Activated T-helper 1 cell treated with anti-CD3 and anti-CD28 coated beads, Interleukin-12 subunit alpha, Interleukin-12 subunit beta, Interleukin-2, Interleukin-4 antibody, amounts not matched to agents 30 ng/mL and 10 ng/mL and 1 ng/mL, durations not matched to agents 14 hours and 24 hours and 36 hours (primary cell): ENCODE measurements at regions of chr14 and their contacts with region 1.

Region 1: DNA sequence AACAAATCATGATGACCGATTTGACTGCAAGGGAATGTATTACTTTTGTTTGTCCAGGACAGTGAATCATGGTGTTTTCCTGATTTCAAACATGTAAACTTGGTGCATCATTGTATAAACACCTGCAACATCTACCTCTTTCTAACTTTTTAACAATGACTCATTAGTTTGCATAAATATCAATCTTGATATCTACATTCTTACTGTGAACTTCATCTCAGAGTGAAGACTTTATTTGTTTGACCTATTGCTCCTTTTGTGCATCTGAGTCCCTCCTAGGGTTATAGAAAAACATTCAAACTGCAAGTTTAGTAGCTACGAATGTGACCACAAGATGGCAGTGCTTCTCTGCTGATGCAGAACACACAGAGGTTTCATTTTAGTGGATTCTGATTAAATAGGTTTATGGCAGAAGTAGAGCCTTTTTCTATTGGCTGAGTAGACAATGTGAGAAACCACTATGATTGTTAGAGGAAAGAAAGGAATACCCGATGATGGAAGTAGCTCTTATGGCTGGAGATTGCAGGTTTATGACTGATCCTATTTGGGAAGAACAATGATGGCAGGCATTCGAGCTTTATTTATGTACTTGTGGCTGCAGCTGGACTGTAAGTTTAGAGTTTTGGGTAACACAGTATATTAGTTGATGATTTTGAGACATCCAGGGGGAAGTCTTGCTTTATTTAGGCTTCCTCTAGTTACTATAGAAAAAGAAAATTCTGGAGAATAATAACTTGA is 244.2 kb upstream of the OR4E1 start:
- DNase-seq: peak; percentile 48
- H3K4me3 Mint-ChIP-seq: peak overlapping the region; percentile 75
- H3K27ac Mint-ChIP-seq: peak overlapping the region; percentile 49
- H3K4me1 Mint-ChIP-seq: peaks cover 62% of the 10 kb centered on the region
- H3K27me3 Mint-ChIP-seq: no peaks in the 10 kb centered on the region

Region 2: GRCh38 chr14:21825149-21825743 is 92.6 kb before region 1 on chr14:
- intact Hi-C with region 1: no loop called
- DNase-seq: peak; percentile 14
- H3K4me3 Mint-ChIP-seq: peak overlapping the region; percentile 61
- H3K27ac Mint-ChIP-seq: peak overlapping the region; percentile 76
- H3K4me1 Mint-ChIP-seq: peaks cover 12% of the 10 kb centered on the region
- H3K27me3 Mint-ChIP-seq: peaks cover 14% of the 10 kb centered on the region

Region 3: DNA sequence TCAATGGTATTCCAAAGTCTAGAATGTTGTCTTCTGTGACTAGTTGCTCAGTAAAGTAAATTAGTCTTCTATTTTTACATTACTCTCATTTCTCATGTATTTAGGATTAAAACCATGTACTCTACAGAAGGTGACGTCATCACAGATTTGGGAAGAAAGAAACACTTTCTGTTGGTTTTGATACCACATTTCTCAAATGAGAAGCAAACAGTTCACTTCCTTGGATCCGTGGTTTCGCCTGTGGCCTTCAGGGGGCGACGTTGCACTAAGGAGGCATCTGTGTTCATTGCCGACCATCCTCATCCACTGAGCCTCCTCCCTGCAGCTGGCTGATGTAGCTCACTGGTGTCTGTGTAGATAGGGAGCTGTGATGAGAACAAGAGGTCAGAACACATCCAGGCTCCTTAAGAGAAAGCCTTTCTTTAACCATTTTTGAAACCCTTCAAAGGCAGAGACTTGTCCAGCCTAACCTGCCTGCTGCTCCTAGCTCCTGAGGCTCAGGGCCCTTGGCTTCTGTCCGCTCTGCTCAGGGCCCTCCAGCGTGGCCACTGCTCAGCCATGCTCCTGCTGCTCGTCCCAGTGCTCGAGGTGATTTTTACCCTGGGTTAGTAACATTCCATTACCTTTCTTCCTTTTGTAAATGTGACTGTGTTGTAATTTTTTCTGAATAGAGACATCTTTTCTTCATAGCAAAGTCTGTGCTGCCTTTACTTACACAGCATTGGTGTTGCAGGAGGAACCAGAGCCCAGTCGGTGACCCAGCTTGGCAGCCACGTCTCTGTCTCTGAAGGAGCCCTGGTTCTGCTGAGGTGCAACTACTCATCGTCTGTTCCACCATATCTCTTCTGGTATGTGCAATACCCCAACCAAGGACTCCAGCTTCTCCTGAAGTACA is 23.6 kb before region 1 on chr14:
- intact Hi-C with region 1: loop called (anchors 1 kb)
- DNase-seq: peak; percentile 41
- H3K4me3 Mint-ChIP-seq: peak overlapping the region; percentile 85
- H3K27ac Mint-ChIP-seq: peak overlapping the region; percentile 82
- H3K4me1 Mint-ChIP-seq: peaks cover 11% of the 10 kb centered on the region
- H3K27me3 Mint-ChIP-seq: peaks cover 3% of the 10 kb centered on the region

Region 4: DNA sequence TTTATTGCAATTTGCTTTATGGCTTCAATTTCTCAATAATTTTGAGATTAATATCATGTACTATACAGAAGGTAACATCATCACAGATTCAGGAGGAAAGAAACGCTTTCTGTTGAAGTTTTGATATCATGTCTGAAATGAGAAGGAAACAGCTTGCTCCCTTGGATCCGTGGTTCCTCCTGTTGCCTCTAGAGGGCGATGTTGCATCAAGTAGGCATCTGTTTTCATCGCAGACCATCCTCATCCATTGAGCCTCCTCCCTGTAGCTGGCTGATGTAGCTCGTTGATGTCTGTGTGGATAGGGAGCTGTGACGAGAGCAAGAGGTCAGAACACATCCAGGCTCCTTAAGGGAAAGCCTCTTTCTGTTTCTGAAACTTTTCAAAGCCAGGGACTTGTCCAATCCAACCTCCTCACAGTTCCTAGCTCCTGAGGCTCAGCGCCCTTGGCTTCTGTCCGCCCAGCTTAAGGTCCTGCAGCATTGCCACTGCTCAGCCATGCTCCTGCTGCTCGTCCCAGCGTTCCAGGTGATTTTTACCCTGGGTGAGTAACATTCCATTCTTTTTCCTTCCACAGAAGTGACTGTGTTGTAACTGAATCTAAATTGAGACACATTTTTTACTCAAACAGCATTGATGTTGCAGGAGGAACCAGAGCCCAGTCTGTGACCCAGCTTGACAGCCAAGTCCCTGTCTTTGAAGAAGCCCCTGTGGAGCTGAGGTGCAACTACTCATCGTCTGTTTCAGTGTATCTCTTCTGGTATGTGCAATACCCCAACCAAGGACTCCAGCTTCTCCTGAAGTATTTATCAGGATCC is 60.5 kb after region 1 on chr14:
- intact Hi-C with region 1: loop called (anchors 1 kb)
- DNase-seq: peak; percentile 51
- H3K4me3 Mint-ChIP-seq: peak overlapping the region; percentile 74
- H3K27ac Mint-ChIP-seq: peak overlapping the region; percentile 40
- H3K4me1 Mint-ChIP-seq: peaks cover 14% of the 10 kb centered on the region
- H3K27me3 Mint-ChIP-seq: peaks cover 5% of the 10 kb centered on the region

Region 5: GRCh38 chr14:22039938-22040775 is 122.3 kb after region 1 on chr14:
- intact Hi-C with region 1: loop called (anchors 2 kb)
- DNase-seq: peak; percentile 12
- H3K4me3 Mint-ChIP-seq: peak overlapping the region; percentile 77
- H3K27ac Mint-ChIP-seq: peak overlapping the region; percentile 24
- H3K4me1 Mint-ChIP-seq: peaks cover 8% of the 10 kb centered on the region
- H3K27me3 Mint-ChIP-seq: peaks cover 2% of the 10 kb centered on the region

Region 6: DNA sequence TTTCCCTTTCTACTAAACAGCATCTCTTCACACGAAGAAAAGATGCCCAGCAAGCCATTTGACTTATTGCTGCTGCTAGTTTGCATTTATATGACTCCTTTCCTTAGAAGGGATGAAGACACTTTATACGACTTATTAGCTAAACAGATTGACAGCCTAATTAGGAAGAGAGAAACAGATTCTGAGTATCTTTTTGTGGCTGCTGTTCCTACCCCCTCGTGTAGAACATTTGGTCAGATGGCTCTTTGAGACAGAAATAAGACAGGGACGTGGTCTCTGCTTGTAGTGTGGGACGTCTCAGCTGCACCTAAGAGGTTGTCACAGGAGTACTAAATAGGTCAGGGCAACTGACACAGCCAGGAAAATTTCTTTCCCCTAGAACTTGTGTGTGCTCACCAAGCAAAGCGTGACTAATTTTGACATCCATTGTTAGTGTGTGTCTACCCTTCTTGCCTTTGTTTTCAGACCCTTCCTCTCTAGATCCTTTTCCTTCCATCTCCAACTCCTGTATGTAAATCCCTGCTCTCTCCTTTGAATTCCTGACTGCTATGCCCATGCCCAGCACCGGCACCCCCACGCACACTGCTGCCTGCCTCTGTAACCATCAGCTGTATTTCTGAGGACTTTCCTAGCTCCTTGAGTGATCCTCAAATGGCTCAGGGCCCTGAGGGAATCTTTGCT is 588.0 kb after region 1 on chr14:
- intact Hi-C with region 1: loop called (anchors 5 kb)
- DNase-seq: no peak
- H3K4me3 Mint-ChIP-seq: peak overlapping the region; percentile 95
- H3K27ac Mint-ChIP-seq: peak overlapping the region; percentile 96
- H3K4me1 Mint-ChIP-seq: peaks cover 78% of the 10 kb centered on the region
- H3K27me3 Mint-ChIP-seq: no peaks in the 10 kb centered on the region

Region 7: DNA sequence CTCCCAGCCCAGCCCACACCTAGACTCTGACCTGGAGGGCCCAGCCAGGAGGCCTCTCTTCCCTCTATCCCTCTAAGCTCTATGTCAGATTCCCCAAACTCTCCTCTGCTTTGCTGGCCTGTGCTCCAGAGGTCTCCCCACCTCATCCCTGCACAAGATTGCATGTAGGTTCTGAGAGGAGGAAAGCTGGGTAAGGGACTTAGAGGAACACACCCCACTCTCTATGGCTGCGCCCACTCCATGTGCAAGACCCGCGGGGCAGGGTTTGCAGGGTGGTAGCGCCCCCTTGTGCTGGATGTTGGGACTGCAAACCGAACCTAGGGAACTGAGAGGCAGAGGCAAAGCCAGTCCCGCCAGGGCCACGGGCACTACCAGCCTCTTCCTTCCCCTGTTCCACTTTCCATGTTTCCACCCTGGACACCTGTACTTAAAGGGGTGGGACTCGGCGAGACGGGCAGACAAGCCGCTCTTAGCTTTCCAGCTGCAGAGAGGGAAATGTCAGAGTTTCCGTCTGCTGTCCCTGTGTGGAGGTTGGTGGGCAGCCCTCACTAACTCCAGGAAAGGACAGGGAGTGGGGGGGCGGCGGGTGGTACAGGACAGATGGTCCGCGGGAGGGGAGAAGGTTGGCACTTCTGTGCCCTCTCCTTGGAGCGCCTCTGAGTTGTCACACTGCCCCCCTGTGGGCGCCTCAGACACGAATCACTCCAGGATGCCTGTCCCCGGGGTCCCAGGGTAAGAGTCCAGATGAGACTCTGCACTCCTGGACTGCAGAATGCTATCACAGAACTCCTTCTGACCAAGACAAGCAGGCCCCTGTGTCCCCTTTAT is 935.3 kb after region 1 on chr14:
- intact Hi-C with region 1: loop called (anchors 2 kb)
- DNase-seq: peak; percentile 80
- H3K4me3 Mint-ChIP-seq: peak overlapping the region; percentile 81
- H3K27ac Mint-ChIP-seq: peak overlapping the region; percentile 82
- H3K4me1 Mint-ChIP-seq: peaks cover 42% of the 10 kb centered on the region
- H3K27me3 Mint-ChIP-seq: peaks cover 13% of the 10 kb centered on the region

Region 8: GRCh38 chr14:22986508-22987054 is 1068.7 kb after region 1 on chr14:
- intact Hi-C with region 1: loop called (anchors 5 kb)
- DNase-seq: peak; percentile 79
- H3K4me3 Mint-ChIP-seq: no peak overlapping the region
- H3K27ac Mint-ChIP-seq: no peak overlapping the region
- H3K4me1 Mint-ChIP-seq: no peaks in the 10 kb centered on the region
- H3K27me3 Mint-ChIP-seq: peaks cover 3% of the 10 kb centered on the region